Psoas muscle (tissue), 8 donors: ENCODE measurements at regions of chr1 and their contacts with region 1.

Region 1: DNA sequence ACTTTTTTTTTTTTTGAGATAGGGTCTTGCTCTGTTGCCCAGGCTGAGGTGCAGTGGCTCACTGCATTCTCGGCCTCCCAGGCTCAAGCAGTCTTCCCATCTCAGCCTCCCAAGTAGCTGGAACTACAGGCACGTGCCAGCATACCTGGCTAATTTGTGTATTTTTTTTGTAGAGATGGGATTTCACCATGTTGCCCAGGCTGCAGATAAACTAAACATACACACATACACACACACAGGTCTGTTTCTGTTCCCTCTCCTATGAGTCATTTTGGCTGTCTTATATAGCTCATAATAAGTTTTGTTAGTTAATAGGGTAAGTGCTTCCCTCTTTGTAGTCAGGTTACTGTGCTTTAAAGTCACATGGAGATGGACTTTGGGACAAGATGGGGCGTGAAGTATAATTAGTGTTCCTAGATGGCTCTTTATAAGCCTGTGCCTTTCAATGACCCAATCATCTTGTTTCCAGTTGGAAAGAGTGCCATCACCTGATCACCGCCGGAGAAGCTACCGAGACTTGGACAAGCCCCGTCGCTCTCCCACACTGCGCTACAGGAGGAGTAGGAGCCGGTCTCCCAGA is 9.1 kb downstream of the PRPF38A start:
- DNase-seq: no peak
- ATAC-seq: peak in 2 of 4 donors; percentile 43 to 54
- H3K4me3 ChIP-seq: no peak overlapping the region
- H3K27ac ChIP-seq: no peak overlapping the region
- H3K4me1 ChIP-seq: no peaks in the 10 kb centered on the region
- H3K27me3 ChIP-seq: no peaks in the 10 kb centered on the region
- CTCF ChIP-seq: no peak

Region 2: GRCh38 chr1:52460694-52461093 is 47.2 kb after region 1 on chr1:
- intact Hi-C with region 1: loop called in 1 of 2 experiments (anchors 10 kb)
- DNase-seq: no peak
- ATAC-seq: no peak
- H3K4me3 ChIP-seq: no peak overlapping the region
- H3K27ac ChIP-seq: no peak overlapping the region
- H3K4me1 ChIP-seq: no peaks in the 10 kb centered on the region
- H3K27me3 ChIP-seq: no peaks in the 10 kb centered on the region
- CTCF ChIP-seq: no peak

Region 3: DNA sequence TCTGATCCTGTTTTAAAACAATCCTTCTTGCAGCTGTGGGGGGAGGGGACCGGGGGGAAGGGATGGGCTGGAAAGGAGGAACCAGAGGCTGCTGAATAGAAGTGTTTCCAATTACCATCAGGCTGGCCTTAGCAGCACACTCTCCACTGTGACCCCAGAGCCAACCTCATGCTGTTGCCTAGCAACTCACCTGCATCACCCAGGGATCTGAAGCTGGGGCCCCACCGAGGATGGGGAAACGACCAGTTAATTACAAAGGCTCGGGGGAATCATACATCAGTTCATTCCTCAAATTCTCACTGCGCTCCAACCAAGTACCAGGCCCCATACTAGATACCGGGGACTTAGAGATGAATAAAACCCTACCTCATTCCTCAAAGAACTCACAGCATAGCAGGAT is 176.8 kb after region 1 on chr1:
- intact Hi-C with region 1: no loop called
- DNase-seq: no peak
- ATAC-seq: no peak
- H3K4me3 ChIP-seq: no peak overlapping the region
- H3K27ac ChIP-seq: no peak overlapping the region
- H3K4me1 ChIP-seq: peaks cover 20% of the 10 kb centered on the region
- H3K27me3 ChIP-seq: no peaks in the 10 kb centered on the region
- CTCF ChIP-seq: no peak